ENCODE measurements at regions of chr16 and their contacts with region 1.

Region 1: GRCh38 chr16:3611146-3611975 is at the start of gene SLX4:
- DNase-seq: peak; percentile 91 to 99
- ATAC-seq: peak; percentile 87 to 95 (median 91)
- H3K4me3 ChIP-seq: peak within 1 kb of the TSS; percentile 95
- H3K4me3 Mint-ChIP-seq: peak within 1 kb of the TSS; percentile 99
- H3K27ac ChIP-seq: peak within 1 kb of the TSS; percentile 85
- H3K27ac Mint-ChIP-seq: peak within 1 kb of the TSS; percentile 97 to 98
- H3K4me1 ChIP-seq: peaks cover 25% of the 10 kb centered on the region
- H3K4me1 Mint-ChIP-seq: peaks cover 48 to 49% of the 10 kb centered on the region in 2 donors
- H3K27me3 ChIP-seq: no peaks in the 10 kb centered on the region
- H3K27me3 Mint-ChIP-seq: no peaks in the 10 kb centered on the region
- CTCF ChIP-seq: no peak
- total RNA-seq, gene SLX4: 13.5 to 18.6 (median 15.5) TPM

Region 2: DNA sequence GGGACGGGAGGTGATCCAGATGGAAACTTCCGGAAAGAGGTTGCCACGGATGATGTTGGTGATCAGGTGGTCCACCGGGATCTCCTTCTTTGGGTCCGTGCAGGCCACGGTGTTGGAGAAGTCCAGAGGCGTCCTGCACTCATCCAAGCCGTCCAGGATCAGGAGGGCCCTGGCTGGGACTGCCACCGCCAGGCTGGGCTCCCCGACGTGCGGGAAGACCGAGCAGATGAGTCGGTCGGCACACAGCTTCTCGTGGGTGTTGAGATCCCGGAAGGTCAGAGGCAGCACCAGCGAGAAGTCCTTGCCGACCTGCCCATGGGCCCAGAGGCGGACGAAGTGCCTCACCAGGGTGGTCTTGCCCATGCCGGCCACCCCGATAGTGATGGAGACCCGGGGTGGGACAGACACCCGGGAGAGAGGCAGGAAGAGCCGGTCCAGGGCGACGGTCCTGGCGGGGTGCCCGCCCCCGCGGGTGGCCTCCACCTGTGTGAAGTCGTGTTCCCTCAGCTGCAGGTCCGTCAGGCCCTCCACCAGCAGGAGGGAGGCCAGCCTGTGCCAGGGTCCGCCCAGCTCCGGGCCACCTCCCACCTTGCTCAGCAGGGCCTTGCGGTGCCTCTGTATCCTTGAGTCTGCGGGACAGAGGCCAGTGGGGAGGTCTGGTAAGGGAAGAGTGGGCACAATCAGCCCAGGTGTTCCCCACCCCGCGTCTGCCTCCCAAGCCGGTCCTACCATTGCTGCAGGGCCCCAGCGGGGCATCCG is 47.1 kb before region 1 on chr16:
- intact Hi-C with region 1: no loop called
- DNase-seq: no peak
- ATAC-seq: no peak
- H3K4me3 ChIP-seq: no peak overlapping the region
- H3K4me3 Mint-ChIP-seq: no peak overlapping the region
- H3K27ac ChIP-seq: no peak overlapping the region
- H3K27ac Mint-ChIP-seq: no peak overlapping the region
- H3K4me1 ChIP-seq: no peaks in the 10 kb centered on the region
- H3K4me1 Mint-ChIP-seq: peaks cover 4 to 5% of the 10 kb centered on the region in 2 donors
- H3K27me3 ChIP-seq: no peaks in the 10 kb centered on the region
- H3K27me3 Mint-ChIP-seq: no peaks in the 10 kb centered on the region
- CTCF ChIP-seq: no peak

Region 3: DNA sequence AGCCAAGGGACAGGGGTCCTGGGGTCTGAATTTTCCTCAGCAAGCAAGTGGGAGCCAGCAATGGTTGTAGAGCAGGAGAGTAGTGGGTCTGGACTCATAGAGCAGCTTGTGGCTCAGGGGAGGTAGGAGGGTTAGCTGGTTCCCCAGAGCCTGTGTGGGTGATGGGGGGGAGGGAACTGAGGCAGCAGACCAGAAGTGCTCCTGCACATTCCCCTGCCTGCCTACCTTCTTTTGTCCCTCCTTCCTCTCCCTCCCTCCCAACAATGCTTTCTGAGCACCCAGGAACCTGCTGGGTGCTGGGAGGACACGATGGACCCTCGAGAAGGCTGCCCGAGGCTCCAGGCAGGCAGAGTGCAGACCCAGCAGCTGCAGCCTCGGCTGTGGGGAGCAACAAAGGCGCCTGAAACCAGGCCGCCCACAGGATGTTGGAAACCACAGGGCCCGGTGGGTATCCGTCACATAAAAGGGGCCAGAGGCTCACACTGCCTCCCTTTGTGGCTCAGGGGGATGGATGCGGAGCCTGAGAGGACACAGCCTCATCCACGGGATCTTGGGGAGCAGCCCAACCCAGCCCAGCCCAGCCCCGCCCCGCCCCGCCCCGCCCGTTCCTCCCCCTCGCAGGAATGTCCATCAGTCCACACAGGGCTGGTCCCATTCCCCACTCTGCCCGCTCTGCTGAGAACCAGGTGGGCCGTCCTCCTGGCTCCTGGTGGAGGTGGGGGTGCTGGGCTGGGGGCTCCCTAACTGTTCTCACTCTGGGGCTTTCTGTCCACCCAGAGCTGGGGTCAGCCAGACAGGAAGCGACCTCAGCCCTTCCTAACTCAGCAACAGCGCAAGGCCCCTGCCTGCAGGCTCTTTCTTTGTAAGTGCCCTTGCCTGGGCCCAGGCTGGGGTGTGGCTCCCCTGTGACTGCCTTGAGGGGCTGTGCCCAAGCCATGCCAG is 32.5 kb before region 1 on chr16:
- intact Hi-C with region 1: loop called (anchors 1 kb)
- DNase-seq: peak; percentile 71 to 75
- ATAC-seq: peak; percentile 62 to 83 (median 78)
- H3K4me3 ChIP-seq: peak overlapping the region; percentile 28
- H3K4me3 Mint-ChIP-seq: peak overlapping the region; percentile 88
- H3K27ac ChIP-seq: peak overlapping the region; percentile 80
- H3K27ac Mint-ChIP-seq: peak overlapping the region; percentile 89 to 97
- H3K4me1 ChIP-seq: peaks cover 66% of the 10 kb centered on the region
- H3K4me1 Mint-ChIP-seq: peaks cover 29 to 63% of the 10 kb centered on the region in 2 donors
- H3K27me3 ChIP-seq: no peaks in the 10 kb centered on the region
- H3K27me3 Mint-ChIP-seq: no peaks in the 10 kb centered on the region
- CTCF ChIP-seq: no peak

Region 4: DNA sequence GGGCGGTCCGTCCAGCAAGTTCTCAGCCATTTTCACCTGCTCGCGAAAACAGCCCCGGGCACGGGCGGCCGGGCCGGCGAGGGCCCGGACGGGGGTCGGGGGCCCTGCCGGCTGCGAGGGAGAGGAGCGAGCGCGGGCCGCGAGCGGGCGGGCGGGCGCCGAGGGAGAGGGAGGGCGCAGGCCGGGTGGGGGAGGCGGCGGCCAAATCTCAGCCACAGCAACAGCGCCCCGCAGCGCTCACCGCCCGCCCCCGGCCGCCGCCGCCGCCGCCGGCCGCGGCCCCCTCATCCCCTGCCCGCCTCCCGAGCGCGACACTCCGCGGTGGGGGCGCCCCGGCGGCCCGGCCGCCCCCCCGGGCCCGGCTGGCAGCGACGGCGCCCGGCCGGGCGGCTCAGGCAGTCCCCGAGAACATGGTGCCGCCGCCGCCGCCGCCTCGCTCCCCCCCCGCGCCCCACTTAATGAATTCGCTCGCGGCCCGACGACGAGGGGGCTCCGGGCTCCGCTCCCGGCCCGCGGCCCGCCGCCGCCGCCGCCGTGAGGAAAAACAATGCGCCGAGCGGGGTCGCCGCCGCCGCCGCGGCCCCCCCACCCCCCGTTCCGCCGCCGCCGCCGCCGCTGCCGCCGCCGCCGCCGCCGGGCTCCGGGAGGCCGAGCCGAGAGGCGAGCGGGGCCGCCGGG is 268.7 kb after region 1 on chr16:
- intact Hi-C with region 1: loop called (anchors 5 kb)
- DNase-seq: peak; percentile 78 to 85
- ATAC-seq: peak; percentile 67 to 78 (median 70)
- H3K4me3 ChIP-seq: peak overlapping the region; percentile 57
- H3K4me3 Mint-ChIP-seq: peak overlapping the region; percentile 94
- H3K27ac ChIP-seq: no peak overlapping the region
- H3K27ac Mint-ChIP-seq: peak overlapping the region in 1 of 2 donors; percentile 83
- H3K4me1 ChIP-seq: peaks cover 43% of the 10 kb centered on the region
- H3K4me1 Mint-ChIP-seq: peaks cover 48 to 49% of the 10 kb centered on the region in 2 donors
- H3K27me3 ChIP-seq: peaks cover 3% of the 10 kb centered on the region
- H3K27me3 Mint-ChIP-seq: peaks cover 11 to 21% of the 10 kb centered on the region in 2 donors
- CTCF ChIP-seq: no peak

Region 5: DNA sequence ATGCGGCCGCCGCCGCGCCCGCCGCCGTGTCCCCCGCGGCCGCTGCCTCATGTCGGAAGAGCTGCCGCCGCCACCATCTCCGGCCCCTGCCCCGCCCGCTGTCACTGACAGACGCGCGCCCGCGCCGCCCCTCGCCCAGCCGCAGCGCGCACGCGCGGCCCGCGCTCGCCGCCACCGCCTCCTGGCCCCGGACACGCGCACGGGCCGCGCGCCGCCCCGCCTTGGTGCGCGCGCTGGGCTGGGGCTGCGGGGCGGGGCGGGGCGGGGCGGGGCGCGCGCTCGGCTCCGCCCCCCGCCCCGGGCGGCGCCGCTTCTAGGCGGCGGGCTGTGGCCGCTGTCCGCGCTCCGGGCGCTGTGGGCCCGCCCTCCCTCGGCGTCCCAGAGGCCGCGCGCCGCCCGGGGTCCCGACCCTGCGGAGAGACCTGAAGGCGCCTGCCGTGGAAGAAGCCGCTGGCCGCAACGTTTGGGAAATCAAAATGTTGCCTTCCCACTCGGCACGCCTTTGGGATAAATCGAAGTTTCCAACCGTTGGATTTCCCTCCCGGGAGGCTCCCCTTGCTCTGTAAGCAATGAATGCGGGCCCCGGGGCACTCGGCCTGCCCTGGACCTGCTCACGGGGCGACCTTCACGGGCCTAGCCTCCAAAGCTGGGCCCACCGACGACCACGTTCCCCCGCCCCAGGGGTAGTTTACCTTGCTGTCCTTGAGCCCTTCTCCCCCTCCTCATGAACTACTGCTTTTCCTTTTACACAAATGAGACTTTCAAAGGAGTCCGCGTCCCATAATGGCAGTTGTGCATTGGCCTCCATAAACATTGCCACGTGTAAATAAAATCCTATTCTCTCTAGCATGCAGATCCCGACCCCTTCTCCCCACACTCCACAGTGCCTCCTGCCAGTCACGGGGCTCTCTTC is 505.2 kb after region 1 on chr16 and contains the start of gene ADCY9:
- intact Hi-C with region 1: loop called (anchors 5 kb)
- DNase-seq: peak; percentile 80 to 93
- ATAC-seq: peak; percentile 77 to 92 (median 78)
- H3K4me3 ChIP-seq: peak within 1 kb of the TSS; percentile 56
- H3K4me3 Mint-ChIP-seq: peak within 1 kb of the TSS; percentile 88
- H3K27ac ChIP-seq: peak within 1 kb of the TSS; percentile 24
- H3K27ac Mint-ChIP-seq: peak within 1 kb of the TSS; percentile 71 to 88
- H3K4me1 ChIP-seq: peaks cover 41% of the 10 kb centered on the region
- H3K4me1 Mint-ChIP-seq: peaks cover 42 to 44% of the 10 kb centered on the region in 2 donors
- H3K27me3 ChIP-seq: no peaks in the 10 kb centered on the region
- H3K27me3 Mint-ChIP-seq: no peaks in the 10 kb centered on the region
- CTCF ChIP-seq: no peak
- total RNA-seq, gene ADCY9: 28.0 to 52.4 (median 38.3) TPM